H1 (cell line): ENCODE measurements at regions of chr10 and their contacts with region 1.

Region 1: DNA sequence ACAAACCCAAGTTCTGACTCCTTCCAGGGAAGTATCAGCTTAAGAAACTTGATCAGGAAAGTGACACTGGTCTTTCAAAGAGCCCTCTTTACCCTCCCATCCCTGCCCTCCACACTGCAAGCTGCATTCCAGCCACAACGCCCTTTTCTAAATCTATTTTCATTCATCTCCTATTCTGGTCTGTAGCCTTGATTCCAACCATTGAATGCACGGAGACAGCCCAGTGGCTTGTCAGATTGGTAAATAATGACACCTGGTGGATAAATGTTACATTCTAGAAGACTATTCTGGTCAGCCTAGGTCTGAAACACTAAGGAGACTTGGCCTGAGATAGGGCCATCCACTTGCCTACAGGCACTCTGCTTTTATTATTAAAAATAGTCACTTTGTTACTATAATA is 20.9 kb downstream of the MORN4 start:
- DNase-seq: peak in 1 of 2 experiments; percentile 27
- H3K4me3 ChIP-seq: no peak overlapping the region
- H3K27ac ChIP-seq: no peak overlapping the region
- H3K4me1 ChIP-seq: peaks cover 0 to 5% (median 3%) of the 10 kb centered on the region in 4 experiments; a peak in 5 of 7 replicates
- H3K27me3 ChIP-seq: no peaks in the 10 kb centered on the region
- CTCF ChIP-seq: peak in 2 of 3 experiments; percentile 49 to 73; a peak in 3 of 4 replicates
- EP300 ChIP-seq: no peak
- POLR2A ChIP-seq: no peak
- RAD21 ChIP-seq: peak; percentile 83 to 87

Region 2: GRCh38 chr10:97037365-97038361 is 574.7 kb before region 1 on chr10:
- CTCF ChIA-PET with region 1: no interaction called
- POLR2A ChIA-PET with region 1: no interaction called
- DNase-seq: peak; percentile 83 to 94
- H3K4me3 ChIP-seq: peak overlapping the region in 2 of 4 experiments; percentile 17 to 25; a peak in 2 of 8 replicates
- H3K27ac ChIP-seq: no peak overlapping the region
- H3K4me1 ChIP-seq: peaks cover under 1 to 7% (median 4%) of the 10 kb centered on the region in 4 experiments; a peak in 6 of 7 replicates
- H3K27me3 ChIP-seq: no peaks in the 10 kb centered on the region; a peak in 1 of 7 replicates
- CTCF ChIP-seq: peak; percentile 90 to 93 (median 90)
- EP300 ChIP-seq: no peak
- POLR2A ChIP-seq: no peak
- RAD21 ChIP-seq: peak; percentile 81 to 90

Region 3: DNA sequence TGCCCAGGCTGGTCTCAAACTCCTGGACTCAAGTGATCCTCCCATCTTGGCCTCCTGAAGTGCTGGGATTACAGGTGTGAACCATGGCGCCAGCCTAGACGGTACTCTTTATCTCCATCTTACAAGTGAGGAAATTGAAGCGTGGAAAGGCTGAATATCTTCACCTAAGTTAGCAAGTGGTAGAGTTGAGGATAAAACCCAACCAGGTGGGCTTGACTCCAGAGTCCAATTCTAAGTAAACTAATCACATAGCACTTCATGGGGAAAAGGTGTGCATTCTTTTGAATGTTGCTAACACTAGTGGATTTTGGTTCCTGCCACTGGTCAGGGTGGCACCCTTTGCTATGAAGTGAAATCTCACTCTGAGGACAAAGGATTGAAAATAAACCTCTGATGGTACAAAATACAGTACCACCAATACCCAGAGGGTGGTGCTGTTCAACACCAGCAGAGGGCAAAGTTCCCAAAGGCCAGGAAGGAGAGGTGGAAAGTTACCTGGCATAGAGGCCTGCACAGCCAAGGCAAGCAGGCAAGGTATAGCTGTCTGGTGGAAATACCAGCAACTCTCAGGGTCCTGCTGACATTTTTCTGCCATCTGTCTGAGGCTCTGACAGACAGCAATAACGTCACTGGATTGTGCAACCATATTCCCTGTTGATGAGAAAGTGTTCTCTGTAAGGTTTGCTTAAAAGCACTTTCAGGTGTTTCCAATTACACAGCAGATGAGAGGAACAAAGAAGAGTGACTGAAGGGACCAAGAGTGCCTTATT is 148.8 kb before region 1 on chr10:
- CTCF ChIA-PET with region 1: interaction called, 50 read pairs
- POLR2A ChIA-PET with region 1: interaction called, 4 read pairs
- DNase-seq: peak in 1 of 2 experiments; percentile 77
- H3K4me3 ChIP-seq: no peak overlapping the region
- H3K27ac ChIP-seq: no peak overlapping the region
- H3K4me1 ChIP-seq: no peaks in the 10 kb centered on the region
- H3K27me3 ChIP-seq: no peaks in the 10 kb centered on the region
- CTCF ChIP-seq: peak; percentile 63 to 96 (median 95)
- EP300 ChIP-seq: no peak
- POLR2A ChIP-seq: peak in 1 of 2 experiments; percentile 34; a peak in 1 of 3 replicates
- RAD21 ChIP-seq: peak; percentile 87 to 91

Region 4: GRCh38 chr10:97518301-97519043 is 93.9 kb before region 1 on chr10:
- CTCF ChIA-PET with region 1: interaction called, 16 read pairs
- POLR2A ChIA-PET with region 1: no interaction called
- DNase-seq: peak in 1 of 2 experiments; percentile 51
- H3K4me3 ChIP-seq: no peak overlapping the region
- H3K27ac ChIP-seq: no peak overlapping the region
- H3K4me1 ChIP-seq: peaks cover 11 to 23% (median 19%) of the 10 kb centered on the region in 4 experiments
- H3K27me3 ChIP-seq: no peaks in the 10 kb centered on the region
- CTCF ChIP-seq: no peak
- EP300 ChIP-seq: no peak
- POLR2A ChIP-seq: no peak
- RAD21 ChIP-seq: no peak

Region 5: DNA sequence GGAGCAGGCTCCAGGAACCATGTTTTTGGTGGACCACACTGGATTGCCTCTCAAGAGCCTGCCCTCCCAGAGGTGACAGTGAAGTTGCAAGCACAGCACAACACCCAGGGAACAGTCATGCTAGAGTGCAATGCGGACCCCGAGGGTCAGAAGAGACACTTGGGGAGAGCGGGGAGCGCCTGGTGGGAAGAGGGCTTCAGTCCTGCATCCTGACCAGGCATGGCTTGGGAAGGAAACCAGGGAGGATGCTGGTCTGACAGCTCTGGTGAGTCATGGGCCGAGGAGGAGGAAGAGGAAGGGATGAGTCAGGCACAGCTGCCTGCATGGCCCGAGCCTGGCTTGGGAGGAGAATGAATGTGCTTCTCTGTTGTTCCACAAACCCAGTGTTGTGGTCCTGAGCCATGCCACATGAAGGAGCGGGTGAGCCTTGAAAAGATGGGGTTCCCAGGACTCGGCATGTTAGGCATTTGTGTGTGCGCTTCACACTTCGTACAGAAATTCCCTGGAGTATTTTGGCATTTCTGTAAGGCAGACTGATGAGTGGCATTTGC is 69.3 kb before region 1 on chr10:
- CTCF ChIA-PET with region 1: interaction called, 30 read pairs
- POLR2A ChIA-PET with region 1: no interaction called
- DNase-seq: no peak
- H3K4me3 ChIP-seq: no peak overlapping the region
- H3K27ac ChIP-seq: no peak overlapping the region
- H3K4me1 ChIP-seq: peaks cover 0 to 21% (median 8%) of the 10 kb centered on the region in 4 experiments; a peak in 6 of 7 replicates
- H3K27me3 ChIP-seq: no peaks in the 10 kb centered on the region
- CTCF ChIP-seq: no peak
- EP300 ChIP-seq: no peak
- POLR2A ChIP-seq: no peak
- RAD21 ChIP-seq: no peak

Region 6: DNA sequence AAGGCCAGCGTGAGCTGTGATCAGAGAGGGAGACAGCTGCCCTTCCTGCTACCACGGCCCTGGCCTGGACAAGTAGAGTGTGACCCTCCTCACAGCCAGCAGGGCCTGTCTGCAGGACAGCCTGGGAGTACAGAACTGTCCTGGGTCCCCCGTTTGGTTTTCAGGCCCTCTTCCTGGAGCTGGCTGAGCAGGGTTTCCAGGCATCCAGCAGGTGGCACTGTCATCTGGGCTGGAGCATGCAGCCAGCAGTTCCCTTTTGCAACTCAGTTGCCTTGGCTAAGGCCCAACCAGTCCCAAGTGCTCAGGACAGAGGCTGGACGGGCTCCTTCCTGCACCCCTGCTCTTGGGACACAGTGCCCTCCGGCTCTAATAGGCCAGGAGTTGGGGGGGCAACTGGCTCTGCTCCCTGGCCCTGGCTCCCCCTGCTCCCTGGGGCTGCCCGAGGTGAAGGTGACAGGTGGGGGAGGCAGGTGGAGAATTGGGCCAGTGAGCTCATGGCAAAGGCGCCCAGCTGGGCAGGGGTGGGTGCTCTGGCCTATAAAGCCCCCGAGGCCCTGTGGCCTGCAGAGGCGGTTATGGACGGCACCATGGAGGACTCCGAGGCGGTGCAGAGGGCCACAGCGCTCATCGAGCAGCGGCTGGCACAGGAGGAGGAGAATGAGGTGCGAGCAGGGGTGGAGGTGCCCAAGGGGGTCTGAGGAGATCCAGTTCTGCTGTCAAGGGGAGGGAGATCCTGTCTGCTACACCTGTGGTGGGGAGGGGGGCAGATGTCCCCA is 40.0 kb before region 1 on chr10 and contains the start of gene ANKRD2:
- CTCF ChIA-PET with region 1: interaction called, 152 read pairs
- POLR2A ChIA-PET with region 1: interaction called, 3 read pairs
- DNase-seq: peak; percentile 59 to 85
- H3K4me3 ChIP-seq: no peak within 1 kb of the TSS
- H3K27ac ChIP-seq: no peak within 1 kb of the TSS
- H3K4me1 ChIP-seq: peaks cover 2 to 6% (median 4%) of the 10 kb centered on the region in 4 experiments; a peak in 3 of 7 replicates
- H3K27me3 ChIP-seq: no peaks in the 10 kb centered on the region
- CTCF ChIP-seq: peak; percentile 96 to 99 (median 98)
- EP300 ChIP-seq: no peak
- POLR2A ChIP-seq: no peak
- RAD21 ChIP-seq: peak; percentile 82 to 89
- total RNA-seq, gene ANKRD2: not detected in 2 replicates

Region 7: DNA sequence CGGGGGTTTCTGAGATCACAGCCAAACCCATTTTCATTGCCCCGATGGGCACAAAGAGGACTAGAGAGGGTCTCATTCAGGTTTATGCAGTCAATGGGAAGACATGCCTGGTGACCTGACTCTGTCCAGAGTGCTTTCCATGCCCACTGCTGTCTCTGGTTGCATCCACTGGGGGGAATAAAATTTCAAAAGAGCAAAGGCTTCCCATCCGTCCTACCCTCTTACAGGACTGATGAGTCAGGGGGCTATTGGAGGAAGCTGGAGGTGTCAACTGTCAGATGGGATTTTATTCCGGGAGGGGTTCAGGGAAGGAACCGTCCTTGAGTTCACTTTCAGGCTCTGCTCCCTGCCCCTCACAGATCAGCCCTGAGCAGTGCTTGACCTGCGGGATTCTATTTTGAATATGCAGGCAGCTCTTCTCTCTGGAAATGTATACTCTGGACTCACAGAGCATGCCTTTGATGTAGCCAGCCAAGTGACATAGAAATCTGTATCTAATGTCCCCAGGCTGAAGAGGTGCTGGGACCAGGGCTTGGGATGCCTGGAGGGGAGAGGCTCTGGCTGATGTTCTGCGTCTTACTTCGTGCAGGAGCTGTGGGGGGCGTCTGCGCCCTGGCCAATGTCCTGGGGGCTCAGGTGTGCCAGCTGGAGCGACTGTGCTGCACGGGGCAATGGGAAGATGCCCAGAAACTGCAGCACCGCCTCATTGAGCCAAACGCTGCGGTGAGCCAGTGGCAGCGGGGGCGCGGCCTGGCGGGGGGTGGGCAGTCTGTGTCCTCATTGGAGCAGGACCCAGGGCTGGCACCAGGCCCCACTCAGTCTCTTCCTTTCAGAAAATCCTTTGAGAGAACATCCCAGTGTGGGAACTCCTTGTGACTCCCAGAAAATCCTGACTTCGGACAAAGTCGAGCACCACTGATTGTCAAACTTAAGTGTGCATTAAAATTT is 10.8 kb before region 1 on chr10:
- CTCF ChIA-PET with region 1: interaction called, 24 read pairs
- POLR2A ChIA-PET with region 1: interaction called, 4 read pairs
- DNase-seq: no peak
- H3K4me3 ChIP-seq: no peak overlapping the region
- H3K27ac ChIP-seq: no peak overlapping the region
- H3K4me1 ChIP-seq: peaks cover 0 to 2% (median under 1%) of the 10 kb centered on the region in 4 experiments; a peak in 1 of 7 replicates
- H3K27me3 ChIP-seq: no peaks in the 10 kb centered on the region
- CTCF ChIP-seq: no peak
- EP300 ChIP-seq: no peak
- POLR2A ChIP-seq: no peak
- RAD21 ChIP-seq: no peak

Region 8: GRCh38 chr10:97629289-97629688 is 16.9 kb after region 1 on chr10:
- CTCF ChIA-PET with region 1: interaction called, 10 read pairs
- POLR2A ChIA-PET with region 1: interaction called, 5 read pairs
- DNase-seq: no peak
- H3K4me3 ChIP-seq: no peak overlapping the region
- H3K27ac ChIP-seq: no peak overlapping the region
- H3K4me1 ChIP-seq: peaks cover 0 to 4% (median 1%) of the 10 kb centered on the region in 4 experiments; a peak in 2 of 7 replicates
- H3K27me3 ChIP-seq: no peaks in the 10 kb centered on the region
- CTCF ChIP-seq: no peak
- EP300 ChIP-seq: no peak
- POLR2A ChIP-seq: no peak
- RAD21 ChIP-seq: no peak

Region 9: DNA sequence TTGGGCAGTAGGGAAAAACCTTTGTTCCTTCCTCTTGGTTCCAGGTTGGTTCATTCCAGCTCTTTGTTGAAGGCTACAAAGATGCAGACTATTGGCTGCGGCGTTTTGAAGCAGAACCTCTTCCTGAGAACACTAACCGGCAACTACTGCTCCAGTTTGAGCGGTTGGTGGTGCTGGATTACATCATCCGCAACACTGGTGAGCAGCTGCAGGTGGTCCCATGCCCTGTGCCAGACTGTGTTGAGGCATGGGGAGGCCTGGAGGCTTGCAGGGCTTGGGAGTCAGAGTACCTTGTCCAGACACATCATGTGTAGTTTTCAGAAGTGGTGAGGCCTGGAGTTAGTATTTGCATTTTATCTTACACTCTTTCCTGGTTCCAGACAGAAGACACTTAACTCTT is 44.4 kb after region 1 on chr10:
- CTCF ChIA-PET with region 1: no interaction called
- POLR2A ChIA-PET with region 1: no interaction called
- DNase-seq: no peak
- H3K4me3 ChIP-seq: no peak overlapping the region
- H3K27ac ChIP-seq: no peak overlapping the region
- H3K4me1 ChIP-seq: no peaks in the 10 kb centered on the region
- H3K27me3 ChIP-seq: no peaks in the 10 kb centered on the region
- CTCF ChIP-seq: no peak
- EP300 ChIP-seq: no peak
- POLR2A ChIP-seq: no peak
- RAD21 ChIP-seq: no peak